Caki2 (cell line): ENCODE measurements at regions of chr3 and their contacts with region 1.

Region 1: DNA sequence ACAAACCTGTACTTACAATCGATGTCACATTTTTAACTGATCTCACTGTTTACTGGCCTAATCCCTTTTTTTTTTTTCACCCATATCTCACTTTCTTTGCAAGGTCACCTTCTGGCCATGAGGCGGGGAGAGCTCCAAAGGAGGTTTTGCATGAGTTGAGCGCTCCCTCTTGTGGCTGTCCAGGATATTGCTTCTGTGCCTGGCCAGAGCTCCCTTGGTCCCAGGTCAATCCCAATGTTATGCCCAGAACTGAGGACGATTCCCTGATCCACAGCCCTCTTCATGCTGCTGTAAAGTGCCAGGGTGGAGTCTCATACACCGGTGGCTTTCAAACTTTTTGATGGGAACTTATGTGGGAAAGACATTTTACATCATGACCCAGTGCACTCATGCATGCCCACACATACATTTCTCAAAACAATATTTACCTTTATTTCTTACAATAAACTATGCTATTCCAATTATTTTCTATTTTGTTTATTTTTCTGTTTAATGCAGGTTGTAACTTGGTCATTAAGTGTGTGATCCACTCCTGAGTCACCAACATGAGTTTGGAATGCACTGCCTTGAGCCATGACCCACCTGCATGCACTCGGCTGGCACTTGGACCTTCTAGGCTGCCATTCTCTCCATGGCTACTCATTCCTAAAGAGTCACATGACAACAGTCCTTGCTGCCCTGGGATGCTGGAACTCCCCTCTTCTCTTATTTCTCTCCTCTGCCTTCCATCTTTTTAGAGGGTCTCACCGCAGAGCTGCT is 9.6 kb upstream of the SST start:
- DNase-seq: peak; percentile 74

Region 2: DNA sequence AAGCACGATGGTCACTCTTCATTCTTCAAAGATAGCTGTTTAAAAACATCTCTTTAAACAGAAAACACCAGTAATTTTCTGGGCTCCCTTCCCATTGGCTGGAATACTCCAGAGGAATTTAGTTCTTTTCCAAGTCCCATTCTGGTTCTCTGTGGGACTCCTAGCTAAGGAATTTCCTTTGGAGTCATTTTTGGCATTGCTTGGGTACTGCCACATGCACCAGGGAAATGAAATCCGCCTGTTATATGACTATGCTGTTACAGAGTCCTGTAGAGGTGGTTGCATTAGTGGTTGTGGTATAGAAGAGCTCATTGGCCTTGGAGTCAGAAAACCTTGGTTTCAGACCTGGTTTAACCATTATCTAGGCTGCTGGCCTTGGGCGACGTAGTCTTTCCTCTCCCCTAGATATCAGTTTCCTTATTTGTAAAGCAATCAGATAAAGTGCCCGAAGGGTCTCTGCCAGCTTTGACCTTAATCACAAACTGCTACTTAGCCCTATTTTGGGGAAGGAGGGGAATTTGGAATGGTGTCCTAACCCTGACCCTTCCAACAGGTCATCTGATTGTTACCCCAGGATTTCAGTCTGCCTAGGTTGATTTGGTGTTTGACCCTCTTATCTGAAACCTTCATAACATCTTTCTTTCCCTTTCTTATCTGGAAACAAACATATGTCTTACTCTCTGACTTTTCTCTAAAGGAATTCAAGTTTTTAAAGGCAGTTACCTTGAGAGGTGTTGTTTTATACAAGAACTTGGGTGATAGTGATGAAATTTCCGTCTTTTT is 469.1 kb before region 1 on chr3:
- in situ Hi-C with region 1: loop called (anchors 25 kb)
- DNase-seq: no peak

Region 3: DNA sequence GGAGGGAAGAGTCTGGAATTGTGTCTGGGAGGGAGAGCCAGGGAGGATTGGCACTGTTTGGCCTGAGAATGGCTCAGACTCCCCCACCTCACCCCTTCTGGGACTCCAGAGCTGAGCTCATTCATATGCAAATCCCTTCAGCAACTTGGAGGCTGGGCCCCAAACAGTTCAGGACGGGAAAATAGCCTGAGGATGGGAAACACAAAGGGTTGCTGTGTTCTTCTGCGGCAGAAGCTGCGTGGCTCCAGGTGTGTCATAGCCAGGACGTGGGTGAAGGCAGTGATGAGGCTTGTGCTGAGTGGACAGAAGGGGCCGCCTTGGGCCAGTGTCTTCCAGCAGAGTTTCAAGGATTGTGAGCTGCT is 404.9 kb before region 1 on chr3:
- in situ Hi-C with region 1: no loop called
- DNase-seq: no peak

Region 4: DNA sequence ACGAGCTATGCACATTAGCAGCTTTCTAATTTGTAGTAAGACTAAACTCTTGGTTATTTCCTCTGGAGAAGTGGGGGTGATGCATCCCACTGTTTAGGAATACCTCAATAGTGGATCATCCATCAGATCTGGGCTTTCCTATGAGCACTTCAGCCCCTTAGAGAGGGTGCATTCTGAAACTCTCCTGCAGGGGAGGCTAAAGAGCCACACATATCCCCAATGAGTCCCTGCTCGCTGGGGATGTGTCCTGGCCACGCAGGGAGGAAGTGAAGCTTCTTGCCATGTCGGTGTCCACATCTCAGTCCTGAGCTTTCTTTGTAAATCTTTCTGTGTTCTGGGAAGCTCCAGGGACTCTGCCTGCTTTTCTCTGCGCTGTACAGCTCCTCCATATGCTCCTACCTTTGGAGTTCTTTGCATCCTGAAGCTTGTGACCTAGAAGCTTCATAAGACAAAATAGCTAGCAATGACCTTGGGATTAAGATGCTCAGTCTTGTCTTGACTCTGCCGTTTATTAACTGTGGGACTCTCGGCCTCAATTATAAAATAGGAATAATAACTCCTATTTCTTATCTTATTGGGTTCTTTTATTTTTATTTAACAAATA is 360.0 kb before region 1 on chr3:
- in situ Hi-C with region 1: loop called (anchors 10 kb)
- DNase-seq: peak; percentile 77

Region 5: GRCh38 chr3:187767266-187768012 is 87.6 kb after region 1 on chr3:
- in situ Hi-C with region 1: no loop called
- DNase-seq: no peak